ENCODE measurements at regions of chr13 and their contacts with region 1.

Region 1: GRCh38 chr13:24053519-24054251 is 106.8 kb upstream of the SPATA13 start:
- DNase-seq: peak; percentile 73
- ATAC-seq: peak; percentile 96
- H3K4me3 Mint-ChIP-seq: 0 out of 2 replicates have a peak overlapping the region, but pooled peaks have one; percentile 2
- H3K27ac Mint-ChIP-seq: peak overlapping the region; percentile 75; the same call in 1 of the 2 replicates
- H3K4me1 Mint-ChIP-seq: peaks cover 28% of the 10 kb centered on the region
- H3K27me3 Mint-ChIP-seq: no peaks in the 10 kb centered on the region
- CTCF ChIP-seq: peak; percentile 53

Region 2: GRCh38 chr13:23984546-23984945 is 69.1 kb before region 1 on chr13:
- CTCF ChIA-PET with region 1: no interaction called
- POLR2A ChIA-PET with region 1: no interaction called
- DNase-seq: no peak
- ATAC-seq: no peak
- H3K4me3 Mint-ChIP-seq: no peak overlapping the region
- H3K27ac Mint-ChIP-seq: no peak overlapping the region
- H3K4me1 Mint-ChIP-seq: peaks cover 7% of the 10 kb centered on the region
- H3K27me3 Mint-ChIP-seq: peaks cover 4% of the 10 kb centered on the region
- CTCF ChIP-seq: no peak

Region 3: GRCh38 chr13:24020375-24020830 is 33.3 kb before region 1 on chr13:
- CTCF ChIA-PET with region 1: interaction called, 10 read pairs
- POLR2A ChIA-PET with region 1: no interaction called
- DNase-seq: peak; percentile 53
- ATAC-seq: 0 out of 2 replicates have a peak, but pooled peaks have one; percentile 44
- H3K4me3 Mint-ChIP-seq: no peak overlapping the region
- H3K27ac Mint-ChIP-seq: no peak overlapping the region
- H3K4me1 Mint-ChIP-seq: no peaks in the 10 kb centered on the region
- H3K27me3 Mint-ChIP-seq: no peaks in the 10 kb centered on the region; the same call in 1 of the 2 replicates
- CTCF ChIP-seq: peak; percentile 29; the same call in 1 of the 2 replicates

Region 4: GRCh38 chr13:24038841-24039330 is 14.8 kb before region 1 on chr13:
- CTCF ChIA-PET with region 1: interaction called, 29 read pairs
- POLR2A ChIA-PET with region 1: no interaction called
- DNase-seq: no peak
- ATAC-seq: no peak
- H3K4me3 Mint-ChIP-seq: no peak overlapping the region
- H3K27ac Mint-ChIP-seq: no peak overlapping the region
- H3K4me1 Mint-ChIP-seq: peaks cover 20% of the 10 kb centered on the region
- H3K27me3 Mint-ChIP-seq: peaks cover 54% of the 10 kb centered on the region
- CTCF ChIP-seq: no peak

Region 5: GRCh38 chr13:24160454-24161009 is 106.8 kb after region 1 on chr13 and contains the start of gene SPATA13:
- CTCF ChIA-PET with region 1: interaction called, 22 read pairs
- POLR2A ChIA-PET with region 1: interaction called, 4 read pairs
- DNase-seq: peak; percentile 96
- ATAC-seq: peak; percentile 87
- H3K4me3 Mint-ChIP-seq: peak within 1 kb of the TSS; percentile 84
- H3K27ac Mint-ChIP-seq: no peak within 1 kb of the TSS
- H3K4me1 Mint-ChIP-seq: peaks cover 38% of the 10 kb centered on the region
- H3K27me3 Mint-ChIP-seq: peaks cover 9% of the 10 kb centered on the region
- CTCF ChIP-seq: no peak
- total RNA-seq, gene SPATA13: 22.1 to 29.0 TPM (median 23.1 TPM) in 3 replicates

Region 6: GRCh38 chr13:24212674-24213073 is 159.0 kb after region 1 on chr13:
- CTCF ChIA-PET with region 1: interaction called, 50 read pairs
- POLR2A ChIA-PET with region 1: interaction called, 4 read pairs
- DNase-seq: no peak
- ATAC-seq: peak; percentile 41
- H3K4me3 Mint-ChIP-seq: no peak overlapping the region
- H3K27ac Mint-ChIP-seq: peak overlapping the region; percentile 4
- H3K4me1 Mint-ChIP-seq: peaks cover 38% of the 10 kb centered on the region
- H3K27me3 Mint-ChIP-seq: no peaks in the 10 kb centered on the region
- CTCF ChIP-seq: no peak

Region 7: GRCh38 chr13:24220086-24220703 is 166.5 kb after region 1 on chr13:
- CTCF ChIA-PET with region 1: interaction called, 50 read pairs
- POLR2A ChIA-PET with region 1: interaction called, 4 read pairs
- DNase-seq: peak; percentile 25
- ATAC-seq: peak; percentile 81
- H3K4me3 Mint-ChIP-seq: no peak overlapping the region
- H3K27ac Mint-ChIP-seq: peak overlapping the region; percentile 90; the same call in 1 of the 2 replicates
- H3K4me1 Mint-ChIP-seq: peaks cover 36% of the 10 kb centered on the region
- H3K27me3 Mint-ChIP-seq: no peaks in the 10 kb centered on the region
- CTCF ChIP-seq: peak; percentile 52